Caco-2 (cell line): ENCODE measurements at regions of chr4 and their contacts with region 1.

Region 1: GRCh38 chr4:122689972-122690371 is 42.5 kb upstream of the BBS12 start:
- DNase-seq: no peak
- H3K4me3 ChIP-seq: no peak overlapping the region
- H3K4me3 Mint-ChIP-seq: no peak overlapping the region
- H3K27ac Mint-ChIP-seq: no peak overlapping the region
- H3K4me1 ChIP-seq: peaks cover 5% of the 10 kb centered on the region; the same call in 1 of the 2 replicates
- H3K4me1 Mint-ChIP-seq: peaks cover 13% of the 10 kb centered on the region
- H3K27me3 ChIP-seq: no peaks in the 10 kb centered on the region
- H3K27me3 Mint-ChIP-seq: no peaks in the 10 kb centered on the region
- CTCF ChIP-seq: no peak

Region 2: DNA sequence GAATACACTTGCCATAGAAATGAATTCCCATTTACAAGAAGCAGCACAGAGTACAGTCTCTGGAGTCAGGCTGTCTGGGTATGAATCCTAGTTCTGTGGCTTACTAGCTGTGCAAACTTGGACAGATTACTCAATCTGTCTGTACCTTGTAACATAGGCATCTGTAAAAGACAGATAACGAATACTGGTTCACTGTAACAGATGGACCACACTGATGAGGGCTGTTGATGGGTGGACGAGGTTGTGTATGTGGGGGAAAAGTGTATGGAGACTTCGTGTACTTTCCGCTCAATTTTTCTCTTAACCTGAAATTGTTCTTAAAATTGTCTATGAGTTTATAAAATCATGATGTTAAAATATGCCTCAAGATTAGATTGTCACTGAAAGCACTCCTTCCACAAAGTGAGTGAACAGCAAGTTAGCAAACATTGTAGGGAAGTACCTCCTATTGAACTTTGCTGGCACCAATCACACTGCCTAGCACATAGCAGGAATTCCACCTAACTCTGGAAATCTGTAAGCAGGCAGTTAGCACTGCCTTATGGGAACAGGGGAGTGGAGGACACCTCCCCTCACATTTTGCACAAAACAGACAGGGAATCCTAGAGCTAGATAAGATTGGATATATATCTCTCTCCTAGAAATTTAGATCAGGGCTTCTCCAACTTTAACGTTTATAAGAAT is 895.3 kb before region 1 on chr4:
- CTCF ChIA-PET with region 1: no interaction called
- POLR2A ChIA-PET with region 1: no interaction called
- intact Hi-C with region 1: loop called (anchors 5 kb)
- DNase-seq: peak in 1 of 2 experiments; percentile 9
- H3K4me3 ChIP-seq: no peak overlapping the region
- H3K4me3 Mint-ChIP-seq: no peak overlapping the region
- H3K27ac Mint-ChIP-seq: no peak overlapping the region
- H3K4me1 ChIP-seq: peaks cover 21% of the 10 kb centered on the region; the same call in 1 of the 2 replicates
- H3K4me1 Mint-ChIP-seq: peaks cover 12% of the 10 kb centered on the region
- H3K27me3 ChIP-seq: no peaks in the 10 kb centered on the region
- H3K27me3 Mint-ChIP-seq: no peaks in the 10 kb centered on the region
- CTCF ChIP-seq: no peak

Region 3: GRCh38 chr4:123046096-123046495 is 356.1 kb after region 1 on chr4:
- CTCF ChIA-PET with region 1: no interaction called
- POLR2A ChIA-PET with region 1: no interaction called
- intact Hi-C with region 1: no loop called
- DNase-seq: no peak
- H3K4me3 ChIP-seq: no peak overlapping the region
- H3K4me3 Mint-ChIP-seq: no peak overlapping the region
- H3K27ac Mint-ChIP-seq: no peak overlapping the region
- H3K4me1 ChIP-seq: no peaks in the 10 kb centered on the region
- H3K4me1 Mint-ChIP-seq: no peaks in the 10 kb centered on the region
- H3K27me3 ChIP-seq: no peaks in the 10 kb centered on the region
- H3K27me3 Mint-ChIP-seq: no peaks in the 10 kb centered on the region
- CTCF ChIP-seq: no peak

Region 4: GRCh38 chr4:123659730-123660129 is 969.8 kb after region 1 on chr4:
- CTCF ChIA-PET with region 1: no interaction called
- POLR2A ChIA-PET with region 1: no interaction called
- intact Hi-C with region 1: no loop called
- DNase-seq: peak in 1 of 2 experiments; percentile 14
- H3K4me3 ChIP-seq: no peak overlapping the region
- H3K4me3 Mint-ChIP-seq: no peak overlapping the region
- H3K27ac Mint-ChIP-seq: no peak overlapping the region
- H3K4me1 ChIP-seq: peaks cover 6% of the 10 kb centered on the region; the same call in 1 of the 2 replicates
- H3K4me1 Mint-ChIP-seq: peaks cover 20% of the 10 kb centered on the region
- H3K27me3 ChIP-seq: no peaks in the 10 kb centered on the region
- H3K27me3 Mint-ChIP-seq: no peaks in the 10 kb centered on the region
- CTCF ChIP-seq: peak; percentile 27 to 34